Panc1 (cell line): ENCODE measurements at regions of chr22 and their contacts with region 1.

Region 1: DNA sequence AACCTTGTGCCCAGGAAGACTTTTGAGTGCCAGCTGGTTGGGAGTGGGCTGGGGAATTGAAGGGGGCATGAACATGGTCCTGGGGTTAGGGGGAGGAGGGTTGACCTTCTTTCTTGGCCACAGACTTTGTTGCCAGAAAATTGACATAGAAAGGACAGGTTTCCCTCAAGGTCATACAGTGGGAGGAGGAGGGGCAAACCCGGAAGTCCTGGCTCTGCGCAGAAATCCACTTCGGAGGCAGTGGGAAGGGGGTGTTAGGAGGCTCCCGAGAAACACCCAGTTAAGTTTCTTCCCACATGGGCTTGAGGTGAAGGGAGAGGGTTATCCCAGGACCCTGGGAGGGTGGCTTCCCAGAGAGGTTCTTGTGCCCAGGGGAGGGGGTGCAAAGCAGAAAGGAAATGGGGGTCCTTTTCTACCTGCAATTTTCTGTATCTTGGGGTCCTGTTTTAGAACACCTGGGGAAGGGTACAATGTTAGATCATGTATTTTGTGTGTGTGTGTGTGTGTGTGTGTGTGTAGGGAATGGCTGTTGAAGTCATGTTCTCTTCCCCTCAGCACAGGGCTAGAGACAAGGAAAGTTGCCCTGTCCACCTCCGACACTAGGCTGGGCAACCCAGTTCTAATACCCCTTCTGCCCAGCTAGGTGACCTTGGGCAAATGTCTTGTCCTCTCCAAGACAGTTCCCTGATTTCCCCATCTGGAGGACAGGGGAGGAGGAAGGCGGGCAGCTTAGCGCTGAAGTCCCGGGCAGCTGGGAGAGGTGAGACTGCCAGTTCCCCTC is 1.1 kb downstream of the PVALB start:
- DNase-seq: no peak
- ATAC-seq: 0 out of 2 replicates have a peak, but pooled peaks have one; percentile 17
- H3K4me3 ChIP-seq: no peak overlapping the region
- H3K27ac ChIP-seq: no peak overlapping the region
- H3K4me1 ChIP-seq: no peaks in the 10 kb centered on the region; the same call in 1 of the 2 replicates
- H3K27me3 ChIP-seq: peaks cover 8% of the 10 kb centered on the region; the same call in 1 of the 2 replicates
- CTCF ChIP-seq: no peak

Region 2: GRCh38 chr22:36636916-36637315 is 178.8 kb before region 1 on chr22:
- CTCF ChIA-PET with region 1: no interaction called
- POLR2A ChIA-PET with region 1: interaction called, 20 read pairs
- in situ Hi-C with region 1: no loop called
- intact Hi-C with region 1: no loop called
- DNase-seq: no peak
- ATAC-seq: no peak
- H3K4me3 ChIP-seq: no peak overlapping the region
- H3K27ac ChIP-seq: no peak overlapping the region
- H3K4me1 ChIP-seq: peaks cover 21% of the 10 kb centered on the region
- H3K27me3 ChIP-seq: no peaks in the 10 kb centered on the region
- CTCF ChIP-seq: no peak